ENCODE measurements at regions of chr9 and their contacts with region 1.

Region 1: DNA sequence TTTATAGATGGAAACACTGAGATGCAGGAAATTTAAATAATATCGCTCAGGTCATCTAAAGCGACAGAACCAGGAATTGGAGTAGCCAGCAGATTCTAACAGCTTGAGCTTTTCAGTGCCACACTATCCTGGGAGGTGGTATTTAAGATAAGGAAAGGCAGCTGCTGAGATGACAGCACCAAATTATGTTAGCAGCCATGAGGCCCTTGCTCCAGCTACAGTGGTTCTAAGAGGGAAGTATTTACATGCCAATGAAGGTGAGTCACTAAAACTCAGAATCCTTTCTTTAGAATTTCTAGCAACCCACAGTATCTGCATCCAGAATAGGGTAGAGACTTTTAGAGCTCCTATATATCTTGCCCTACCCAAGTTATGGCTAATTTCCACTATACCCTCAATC is 127.0 kb upstream of the VLDLR start:
- DNase-seq: peak in 1 of 7 donors; percentile 10
- H3K4me3 ChIP-seq: no peak overlapping the region
- H3K27ac ChIP-seq: no peak overlapping the region
- H3K4me1 ChIP-seq: peaks cover 11 to 12% of the 10 kb centered on the region in 2 donors
- H3K27me3 ChIP-seq: no peaks in the 10 kb centered on the region
- CTCF ChIP-seq: no peak
- POLR2A ChIP-seq: no peak

Region 2: DNA sequence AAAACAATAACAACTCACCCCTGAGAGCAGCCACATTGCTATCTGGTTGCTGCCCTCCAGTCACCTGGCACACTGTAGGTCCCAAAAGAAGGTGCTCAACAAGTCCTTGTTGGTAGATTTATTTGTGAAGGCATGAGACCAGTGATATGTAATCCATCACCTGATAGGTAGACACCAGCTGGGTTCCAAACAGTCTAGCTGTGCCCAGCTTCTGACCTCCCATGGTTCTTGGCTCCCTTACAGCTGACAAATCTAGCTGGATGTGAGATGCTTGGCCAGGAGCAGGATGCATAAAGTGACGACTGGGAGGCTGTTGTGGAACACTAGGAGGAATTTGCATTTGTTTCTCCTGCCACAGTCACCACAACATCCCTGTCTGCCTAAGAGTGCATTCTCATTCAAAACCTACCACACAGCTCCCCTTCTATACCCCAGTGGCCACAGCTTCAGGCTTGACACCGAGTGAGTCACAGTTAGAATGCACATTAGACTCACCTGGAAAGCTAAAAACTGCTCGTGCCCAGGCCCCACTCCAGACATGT is 119.2 kb after region 1 on chr9:
- intact Hi-C with region 1: loop called in 1 of 2 experiments (anchors 10 kb)
- DNase-seq: no peak
- H3K4me3 ChIP-seq: no peak overlapping the region
- H3K27ac ChIP-seq: no peak overlapping the region
- H3K4me1 ChIP-seq: no peaks in the 10 kb centered on the region
- H3K27me3 ChIP-seq: no peaks in the 10 kb centered on the region
- CTCF ChIP-seq: no peak
- POLR2A ChIP-seq: no peak

Region 3: DNA sequence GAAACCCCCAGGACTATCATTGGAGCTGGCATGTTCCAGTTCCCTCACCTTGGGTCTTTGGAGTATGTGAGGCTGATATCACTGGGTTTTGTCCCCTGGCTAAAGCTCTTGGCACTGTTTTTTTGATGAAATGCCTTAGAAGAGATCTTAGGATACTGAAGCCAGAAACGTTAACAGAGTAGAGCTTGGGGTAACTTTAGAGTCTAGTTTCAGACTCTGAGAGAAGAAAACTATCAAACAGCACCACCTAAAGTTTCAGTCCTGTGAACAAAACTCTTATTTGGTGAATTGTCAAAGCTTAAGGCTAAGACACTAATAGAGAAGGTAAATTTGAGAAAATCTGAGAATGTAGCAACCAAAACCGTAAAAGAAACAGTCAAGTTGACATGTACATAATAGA is 461.0 kb after region 1 on chr9:
- intact Hi-C with region 1: no loop called
- DNase-seq: no peak
- H3K4me3 ChIP-seq: no peak overlapping the region
- H3K27ac ChIP-seq: no peak overlapping the region
- H3K4me1 ChIP-seq: no peaks in the 10 kb centered on the region
- H3K27me3 ChIP-seq: peaks cover 4% of the 10 kb centered on the region
- CTCF ChIP-seq: no peak
- POLR2A ChIP-seq: no peak